Activated CD4-positive, alpha-beta T cell treated with anti-CD3 and anti-CD28 coated beads, Interleukin-2, amount 10 ng/mL, durations not matched to agents 7 days and 5 days (primary cell): ENCODE measurements at regions of chrX and their contacts with region 1.

Region 1: DNA sequence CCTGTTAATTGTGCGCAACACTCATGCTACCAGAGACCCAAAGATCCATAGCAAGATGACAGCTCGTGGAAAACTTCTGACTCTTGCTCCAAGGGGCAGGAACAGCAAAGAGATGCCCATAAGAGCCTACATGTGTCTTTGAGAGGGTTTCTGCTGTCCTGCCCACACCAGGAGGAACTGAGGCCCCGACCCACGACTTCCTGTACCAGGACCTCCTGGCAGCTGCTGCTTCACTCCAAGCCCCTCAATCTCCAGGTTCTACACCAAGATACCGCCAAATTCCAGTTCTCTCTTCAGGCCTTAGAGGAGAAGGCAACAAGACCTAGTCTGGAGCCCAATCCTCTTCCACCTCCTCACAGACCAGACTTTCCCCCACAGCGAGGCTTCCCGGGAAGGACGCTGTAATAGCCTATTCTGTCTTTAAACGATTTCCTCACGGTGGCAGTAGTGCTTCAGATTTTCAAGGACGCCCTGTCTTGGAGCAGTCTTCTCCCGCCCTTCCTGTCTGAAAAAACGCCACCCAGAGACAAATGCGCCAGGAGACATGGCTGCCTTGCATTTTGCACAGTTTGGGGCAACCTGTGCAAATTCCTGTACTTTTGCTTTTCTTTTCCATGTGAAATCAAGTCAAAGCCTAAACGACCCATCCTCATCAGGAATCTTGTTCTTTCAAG is 230.2 kb upstream of the STK26 start:
- DNase-seq: no peak
- H3K4me3 Mint-ChIP-seq: no peak overlapping the region
- H3K27ac Mint-ChIP-seq: no peak overlapping the region
- H3K4me1 Mint-ChIP-seq: no peaks in the 10 kb centered on the region
- H3K27me3 Mint-ChIP-seq: no peaks in the 10 kb centered on the region

Region 2: GRCh38 chrX:131763674-131764073 is 29.3 kb before region 1 on chrX:
- CTCF ChIA-PET with region 1: interaction called, 12 read pairs
- POLR2A ChIA-PET with region 1: no interaction called
- DNase-seq: no peak
- H3K4me3 Mint-ChIP-seq: no peak overlapping the region
- H3K27ac Mint-ChIP-seq: no peak overlapping the region
- H3K4me1 Mint-ChIP-seq: no peaks in the 10 kb centered on the region
- H3K27me3 Mint-ChIP-seq: no peaks in the 10 kb centered on the region

Region 3: GRCh38 chrX:131802835-131803626 is 10.1 kb after region 1 on chrX:
- CTCF ChIA-PET with region 1: interaction called, 10 read pairs
- POLR2A ChIA-PET with region 1: no interaction called
- DNase-seq: no peak
- H3K4me3 Mint-ChIP-seq: no peak overlapping the region
- H3K27ac Mint-ChIP-seq: no peak overlapping the region
- H3K4me1 Mint-ChIP-seq: no peaks in the 10 kb centered on the region
- H3K27me3 Mint-ChIP-seq: no peaks in the 10 kb centered on the region

Region 4: DNA sequence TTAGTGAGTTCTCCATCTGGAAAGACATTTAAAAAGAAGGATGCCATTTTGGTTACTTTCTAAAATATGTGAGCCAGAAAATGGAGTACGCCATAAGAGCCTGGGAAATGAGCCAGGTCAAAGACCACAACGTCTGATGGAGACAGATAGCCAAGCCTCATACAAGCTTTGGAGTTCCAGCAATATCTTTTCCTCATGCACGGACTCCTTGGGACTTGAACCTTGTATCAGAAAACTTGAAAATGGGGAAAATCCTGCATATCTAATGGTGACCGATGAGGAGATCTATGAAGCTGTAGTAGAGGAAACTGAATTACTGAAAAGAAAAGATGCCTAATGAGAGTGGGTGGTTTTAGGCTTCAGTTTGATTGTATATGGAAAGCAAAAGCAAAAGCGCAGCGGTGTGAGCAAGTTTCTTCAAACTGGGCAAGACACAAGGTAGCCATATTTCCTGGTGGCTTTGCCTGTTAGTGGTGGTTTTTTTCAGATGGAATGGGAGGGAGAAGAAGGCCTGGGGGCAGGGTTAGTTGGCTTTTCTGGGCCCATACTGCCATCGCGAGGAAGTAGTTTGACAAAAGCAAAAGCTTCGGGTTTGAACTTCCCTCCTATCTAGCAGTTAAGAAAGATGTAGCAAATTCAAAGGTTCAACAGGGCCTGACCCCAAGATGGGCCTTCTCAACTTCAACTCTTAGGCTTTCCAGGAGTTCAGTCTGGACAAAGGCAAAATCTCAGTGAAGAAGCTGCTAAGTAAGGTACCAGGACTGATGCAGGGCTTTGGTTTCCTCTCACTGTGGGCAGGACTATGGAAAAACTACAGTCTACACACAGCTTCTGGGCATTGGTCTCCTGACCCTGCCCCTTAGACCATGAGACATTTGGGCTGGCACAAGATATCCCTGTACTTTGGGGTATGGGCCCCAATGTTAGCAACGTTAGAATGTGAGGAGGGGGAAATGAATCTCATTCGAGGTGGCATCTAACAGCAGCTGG is 20.2 kb after region 1 on chrX:
- CTCF ChIA-PET with region 1: interaction called, 11 read pairs
- POLR2A ChIA-PET with region 1: no interaction called
- DNase-seq: peak; percentile 82
- H3K4me3 Mint-ChIP-seq: peak overlapping the region; percentile 75
- H3K27ac Mint-ChIP-seq: peak overlapping the region; percentile 97
- H3K4me1 Mint-ChIP-seq: peaks cover 34% of the 10 kb centered on the region
- H3K27me3 Mint-ChIP-seq: no peaks in the 10 kb centered on the region

Region 5: DNA sequence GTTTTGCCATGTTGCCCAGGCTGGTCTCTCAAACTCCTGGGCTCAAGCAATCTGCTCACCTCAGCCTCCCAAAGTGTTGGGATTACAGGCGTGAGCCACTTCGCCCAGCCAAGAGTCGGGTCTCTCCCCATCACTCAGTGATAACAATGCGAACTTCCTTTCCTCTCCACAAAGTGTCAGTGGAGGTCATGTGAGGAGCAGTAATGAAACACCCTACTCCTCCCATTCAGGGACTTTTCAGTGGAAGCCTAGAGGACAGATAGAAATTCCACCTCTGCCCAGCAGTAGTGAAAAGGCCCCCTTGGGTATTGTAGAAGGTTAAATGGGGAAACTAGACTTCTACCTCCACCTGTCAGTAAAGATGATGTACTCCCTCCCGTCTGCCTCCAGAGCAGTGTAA is 88.3 kb after region 1 on chrX:
- CTCF ChIA-PET with region 1: no interaction called
- POLR2A ChIA-PET with region 1: no interaction called
- DNase-seq: no peak
- H3K4me3 Mint-ChIP-seq: no peak overlapping the region
- H3K27ac Mint-ChIP-seq: peak overlapping the region; percentile 62
- H3K4me1 Mint-ChIP-seq: no peaks in the 10 kb centered on the region
- H3K27me3 Mint-ChIP-seq: no peaks in the 10 kb centered on the region

Region 6: DNA sequence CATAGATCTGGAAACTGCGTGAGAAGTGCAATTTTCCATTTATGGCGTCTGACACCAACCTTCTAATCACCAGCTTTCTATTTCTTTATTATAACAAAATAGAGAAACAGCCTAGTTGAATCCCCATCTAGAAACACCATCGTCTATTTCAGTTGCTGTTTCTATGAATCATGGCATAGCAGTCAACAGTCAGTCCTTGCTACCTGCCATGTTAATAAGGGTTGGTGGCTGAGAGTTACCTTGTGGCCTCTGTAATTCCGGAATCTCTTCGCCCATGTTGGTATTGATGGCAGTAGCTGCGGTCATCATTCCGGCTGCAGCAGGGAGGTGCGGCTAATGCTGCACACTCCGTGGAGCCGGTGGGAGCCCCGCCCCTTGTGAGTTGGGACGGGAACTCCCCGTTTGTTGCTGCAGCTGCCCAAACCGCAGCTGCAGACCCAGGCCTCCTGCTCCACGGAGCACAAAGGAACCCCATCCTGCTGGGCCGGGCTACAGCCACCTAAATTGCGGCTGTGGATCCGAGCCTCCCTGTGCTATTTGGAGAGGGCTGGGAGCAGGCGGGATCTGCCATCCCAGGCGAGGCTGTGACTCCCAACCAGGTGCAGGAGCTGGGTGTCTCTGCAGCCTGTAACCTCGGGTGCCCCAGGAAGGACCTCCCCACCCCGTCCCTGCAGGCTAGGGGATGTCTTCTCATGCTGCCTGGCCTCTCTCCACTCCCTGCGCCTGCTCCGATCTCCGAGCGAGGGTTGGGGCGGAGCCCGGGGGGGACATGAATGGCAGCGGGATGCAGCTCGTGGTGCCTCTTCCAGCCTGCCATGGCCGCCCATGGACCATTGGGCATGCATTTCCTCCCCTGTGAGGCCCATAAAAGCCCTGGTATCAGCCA is 114.8 kb after region 1 on chrX:
- CTCF ChIA-PET with region 1: no interaction called
- POLR2A ChIA-PET with region 1: no interaction called
- DNase-seq: no peak
- H3K4me3 Mint-ChIP-seq: no peak overlapping the region
- H3K27ac Mint-ChIP-seq: no peak overlapping the region
- H3K4me1 Mint-ChIP-seq: no peaks in the 10 kb centered on the region
- H3K27me3 Mint-ChIP-seq: no peaks in the 10 kb centered on the region